OCI-LY7 (cell line): ENCODE measurements at regions of chr5 and their contacts with region 1.

Region 1: DNA sequence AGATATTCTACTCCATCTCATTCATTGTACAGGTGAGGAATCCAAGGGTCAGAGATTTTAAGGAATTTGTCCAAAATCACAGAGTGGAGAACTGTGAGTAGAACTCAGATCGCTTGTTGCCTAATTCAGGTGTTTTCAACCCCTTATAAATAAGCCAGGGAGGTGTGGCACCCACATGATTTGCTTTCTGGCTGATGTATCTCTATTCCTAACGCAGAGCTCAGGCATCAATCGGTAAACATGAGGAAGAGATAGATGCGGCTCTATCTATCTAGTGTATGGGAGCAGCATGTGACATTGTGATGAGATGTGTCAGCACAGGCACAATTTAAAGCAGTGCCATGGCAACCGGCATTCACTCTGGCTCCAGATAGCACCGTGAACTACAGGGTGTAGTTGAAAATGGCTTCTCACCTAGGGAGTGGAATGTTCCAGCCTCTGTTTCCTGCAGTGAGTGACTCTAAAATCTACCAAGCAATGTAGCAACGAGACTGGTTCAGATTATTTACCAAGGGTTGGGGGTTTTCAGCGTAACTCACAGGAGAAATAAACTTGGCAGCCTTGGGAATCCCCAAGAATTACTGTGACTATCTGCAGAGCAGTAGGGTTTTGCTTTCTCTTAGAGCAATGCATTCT is 53.4 kb upstream of the SUB1 start:
- DNase-seq: peak; percentile 18
- H3K4me3 ChIP-seq: peak overlapping the region; percentile 48
- H3K27ac ChIP-seq: peak overlapping the region; percentile 46
- H3K4me1 ChIP-seq: peaks cover 27% of the 10 kb centered on the region
- CTCF ChIP-seq: no peak

Region 2: GRCh38 chr5:32444431-32445286 is 87.3 kb before region 1 on chr5 and contains the start of gene ZFR:
- CTCF ChIA-PET with region 1: no interaction called
- POLR2A ChIA-PET with region 1: no interaction called
- intact Hi-C with region 1: loop called (anchors 5 kb)
- DNase-seq: peak; percentile 90
- H3K4me3 ChIP-seq: peak within 1 kb of the TSS; percentile 85
- H3K27ac ChIP-seq: peak within 1 kb of the TSS; percentile 63
- H3K4me1 ChIP-seq: peaks cover 17% of the 10 kb centered on the region
- CTCF ChIP-seq: no peak
- total RNA-seq, gene ZFR: 52.7 and 54.8 TPM in 2 replicates